ENCODE measurements at regions of chr18 and their contacts with region 1.

Region 1: GRCh38 chr18:3665780-3666525 is 216.0 kb downstream of the TGIF1 start:
- H3K4me3 ChIP-seq: no peak overlapping the region
- H3K27ac ChIP-seq: peak overlapping the region; percentile 54
- H3K4me1 ChIP-seq: no peaks in the 10 kb centered on the region
- CTCF ChIP-seq: peak; percentile 70

Region 2: GRCh38 chr18:3281456-3282400 is 384.2 kb before region 1 on chr18:
- CTCF ChIA-PET with region 1: interaction called, 167 read pairs
- POLR2A ChIA-PET with region 1: interaction called, 5 read pairs
- H3K4me3 ChIP-seq: no peak overlapping the region
- H3K27ac ChIP-seq: no peak overlapping the region
- H3K4me1 ChIP-seq: no peaks in the 10 kb centered on the region
- CTCF ChIP-seq: peak; percentile 36; the same call in 1 of the 2 replicates

Region 3: GRCh38 chr18:3585656-3586509 is 80.1 kb before region 1 on chr18:
- CTCF ChIA-PET with region 1: interaction called, 32 read pairs
- POLR2A ChIA-PET with region 1: no interaction called
- H3K4me3 ChIP-seq: no peak overlapping the region
- H3K27ac ChIP-seq: no peak overlapping the region
- H3K4me1 ChIP-seq: no peaks in the 10 kb centered on the region; the same call in 1 of the 2 replicates
- CTCF ChIP-seq: peak; percentile 63

Region 4: DNA sequence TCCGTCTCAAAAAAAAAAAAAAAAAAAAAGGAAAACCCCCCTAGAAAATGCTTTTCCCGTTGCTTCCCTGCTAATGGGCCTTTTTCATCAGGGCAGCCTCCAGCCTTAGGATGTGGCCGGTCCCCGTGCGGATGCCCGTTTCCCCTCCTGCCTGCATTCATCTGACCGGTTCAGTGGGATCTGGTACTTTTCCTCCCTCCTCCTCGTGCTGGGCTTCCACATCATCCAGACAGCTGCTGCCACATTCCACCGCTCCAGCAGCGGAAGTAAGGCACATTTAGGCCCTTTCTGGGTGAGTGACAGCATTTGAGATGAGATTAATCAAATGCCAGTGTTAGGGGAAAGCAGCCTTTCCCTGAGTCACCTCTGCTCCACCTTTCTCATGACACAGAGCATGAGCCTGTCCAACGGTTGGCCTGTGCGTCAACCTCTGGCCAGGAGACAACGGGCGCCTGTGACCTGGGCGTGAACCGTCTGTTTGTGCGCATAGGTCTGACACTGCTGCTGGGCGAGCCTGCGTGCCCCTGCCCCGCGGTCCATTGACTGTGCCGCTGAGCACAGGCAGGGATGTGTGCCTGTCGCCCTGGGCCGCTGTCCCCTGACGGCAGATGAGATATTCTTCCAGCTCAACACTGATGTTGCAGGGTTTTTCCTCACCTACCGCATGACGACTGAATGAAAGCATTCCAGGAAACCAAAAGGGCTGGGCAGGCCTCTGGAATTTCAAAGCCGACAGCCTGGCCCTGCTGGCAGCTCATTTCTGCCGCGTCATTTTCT is 42.0 kb before region 1 on chr18:
- CTCF ChIA-PET with region 1: interaction called, 20 read pairs
- POLR2A ChIA-PET with region 1: interaction called, 3 read pairs
- H3K4me3 ChIP-seq: no peak overlapping the region; the same call in 1 of the 2 replicates
- H3K27ac ChIP-seq: peak overlapping the region; percentile 41; the same call in 1 of the 2 replicates
- H3K4me1 ChIP-seq: peaks cover 16% of the 10 kb centered on the region
- CTCF ChIP-seq: no peak

Region 5: GRCh38 chr18:3688699-3689098 is 22.7 kb after region 1 on chr18:
- CTCF ChIA-PET with region 1: interaction called, 17 read pairs
- POLR2A ChIA-PET with region 1: interaction called, 4 read pairs
- H3K4me3 ChIP-seq: no peak overlapping the region
- H3K27ac ChIP-seq: peak overlapping the region; percentile 54
- H3K4me1 ChIP-seq: peaks cover 18% of the 10 kb centered on the region
- CTCF ChIP-seq: no peak

Region 6: DNA sequence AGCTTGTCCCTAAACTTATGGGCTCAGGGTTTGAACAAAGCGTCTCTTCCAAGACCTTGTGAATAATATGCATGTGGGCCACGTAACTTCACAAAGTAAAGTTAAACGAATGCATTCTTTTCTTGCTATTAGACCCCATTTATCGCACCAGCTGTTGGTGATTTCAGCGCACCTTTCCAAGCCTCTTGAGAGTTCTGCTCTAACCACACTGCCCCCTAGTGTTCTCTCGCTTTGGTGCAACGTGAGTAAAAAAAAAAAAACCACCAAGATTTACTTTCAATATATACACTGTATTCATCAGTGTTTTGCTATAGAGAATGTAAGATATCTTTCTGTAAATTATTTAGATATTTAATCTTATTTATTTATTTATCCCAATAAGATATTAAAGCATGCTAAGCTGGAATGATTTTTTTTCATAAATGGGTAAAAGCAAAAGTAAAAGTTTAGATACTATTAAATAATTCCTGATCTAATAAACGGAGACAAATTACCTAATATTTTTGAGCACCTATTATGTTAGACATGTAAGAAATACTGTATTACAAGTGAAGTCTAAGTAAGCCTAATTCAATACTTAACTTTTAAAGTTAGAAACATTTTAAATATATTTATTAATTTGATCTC is 329.6 kb after region 1 on chr18:
- CTCF ChIA-PET with region 1: interaction called, 20 read pairs
- POLR2A ChIA-PET with region 1: no interaction called
- H3K4me3 ChIP-seq: no peak overlapping the region
- H3K27ac ChIP-seq: no peak overlapping the region
- H3K4me1 ChIP-seq: no peaks in the 10 kb centered on the region
- CTCF ChIP-seq: no peak; the same call in 1 of the 2 replicates